Left colon (tissue), 2 donors: ENCODE measurements at regions of chr17 and their contacts with region 1.

Region 1: DNA sequence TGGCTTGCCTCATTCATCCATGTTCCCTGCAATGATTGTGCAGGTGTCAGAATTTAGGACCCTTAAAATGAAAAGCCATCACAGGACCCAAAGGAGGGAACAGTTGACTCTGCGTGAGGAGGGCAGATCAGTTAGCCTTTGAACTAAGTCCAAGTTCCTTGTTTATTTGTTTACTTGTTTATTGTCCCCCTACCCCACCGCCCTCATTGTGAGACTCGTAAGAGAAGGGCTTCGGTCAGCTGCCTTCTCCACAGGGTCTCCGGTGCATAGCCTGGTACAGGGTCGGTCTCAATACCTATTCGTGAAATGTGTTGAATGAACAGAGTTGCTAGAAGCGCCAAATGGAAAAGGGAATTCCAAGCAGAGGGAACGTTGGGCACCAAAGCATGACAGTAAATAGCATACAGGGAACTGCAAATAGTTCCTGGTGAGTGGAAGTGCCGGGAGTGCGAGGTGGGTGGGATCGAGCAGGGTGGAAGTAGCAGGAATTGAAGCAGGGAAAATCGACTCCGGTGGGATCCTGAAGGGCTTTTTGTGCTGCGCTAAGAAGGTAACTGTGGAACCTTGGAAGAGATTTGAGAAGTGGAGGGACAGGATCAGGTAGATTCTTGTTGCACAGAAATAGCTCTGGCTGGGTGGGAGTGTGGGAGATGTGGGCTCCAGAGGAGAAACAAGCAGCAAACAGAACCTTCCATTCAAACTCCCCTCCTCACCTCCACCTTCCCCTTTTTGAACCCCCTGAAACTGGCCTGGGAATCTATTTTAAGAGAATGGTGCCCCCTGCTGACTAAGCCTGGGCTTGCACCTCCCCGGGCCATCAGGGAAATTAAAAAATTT is 12.7 kb downstream of the SLC35B1 start:
- DNase-seq: peak in 1 of 2 donors; percentile 74
- ATAC-seq: peak; percentile 53

Region 2: GRCh38 chr17:49468811-49469385 is 226.2 kb before region 1 on chr17:
- intact Hi-C with region 1: no loop called
- DNase-seq: no peak
- ATAC-seq: no peak

Region 3: GRCh38 chr17:49575579-49576087 is 119.4 kb before region 1 on chr17 and contains the start of gene NXPH3:
- intact Hi-C with region 1: loop called (anchors 5 kb)
- DNase-seq: peak; percentile 42 to 62
- ATAC-seq: peak; percentile 77
- total RNA-seq, gene NXPH3: 0.70 to 3.6 TPM

Region 4: DNA sequence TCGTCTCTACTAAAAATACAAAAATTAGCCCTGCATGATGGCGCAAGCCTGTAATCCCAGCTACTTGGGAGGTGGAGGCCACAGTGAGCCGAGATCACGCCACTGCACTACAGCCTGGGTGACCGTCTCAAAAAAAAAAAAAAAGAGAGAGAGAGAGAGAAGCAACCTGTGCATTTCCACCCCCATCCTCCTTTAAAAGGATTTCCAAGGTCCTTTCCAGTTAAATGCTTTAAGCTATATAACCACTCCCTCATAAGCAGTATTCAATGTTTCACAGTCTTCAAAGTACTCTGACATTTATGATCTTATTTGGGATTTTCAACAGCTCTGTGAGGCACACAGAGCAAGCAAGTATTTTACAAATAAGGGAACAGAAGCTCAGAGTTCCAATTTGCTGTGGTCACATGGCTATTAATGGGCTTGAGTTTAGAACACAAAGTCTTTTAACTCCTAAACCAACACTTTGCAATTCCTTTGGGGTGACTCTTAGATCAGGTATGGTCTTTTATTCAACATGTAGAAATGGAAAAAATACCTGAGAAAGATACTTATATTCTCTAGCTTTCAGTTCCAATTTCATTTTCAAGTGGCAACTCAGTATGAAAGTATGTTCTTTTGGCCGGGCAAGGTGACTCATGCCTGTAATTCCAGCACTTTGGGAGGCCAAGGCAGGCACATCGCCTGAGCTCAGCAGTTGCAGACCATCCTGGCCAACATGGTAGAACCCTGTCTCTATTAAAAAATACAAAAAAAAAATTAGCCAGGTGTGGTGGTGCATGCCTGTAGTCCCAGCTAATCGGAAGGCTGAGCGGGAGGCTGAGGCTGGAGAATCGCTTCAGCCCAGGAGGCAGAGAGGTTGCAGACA is 48.4 kb before region 1 on chr17:
- intact Hi-C with region 1: loop called in 1 of 2 experiments (anchors 5 kb)
- DNase-seq: no peak
- ATAC-seq: peak; percentile 35